SK-N-SH (cell line): ENCODE measurements at regions of chr6 and their contacts with region 1.

Region 1: DNA sequence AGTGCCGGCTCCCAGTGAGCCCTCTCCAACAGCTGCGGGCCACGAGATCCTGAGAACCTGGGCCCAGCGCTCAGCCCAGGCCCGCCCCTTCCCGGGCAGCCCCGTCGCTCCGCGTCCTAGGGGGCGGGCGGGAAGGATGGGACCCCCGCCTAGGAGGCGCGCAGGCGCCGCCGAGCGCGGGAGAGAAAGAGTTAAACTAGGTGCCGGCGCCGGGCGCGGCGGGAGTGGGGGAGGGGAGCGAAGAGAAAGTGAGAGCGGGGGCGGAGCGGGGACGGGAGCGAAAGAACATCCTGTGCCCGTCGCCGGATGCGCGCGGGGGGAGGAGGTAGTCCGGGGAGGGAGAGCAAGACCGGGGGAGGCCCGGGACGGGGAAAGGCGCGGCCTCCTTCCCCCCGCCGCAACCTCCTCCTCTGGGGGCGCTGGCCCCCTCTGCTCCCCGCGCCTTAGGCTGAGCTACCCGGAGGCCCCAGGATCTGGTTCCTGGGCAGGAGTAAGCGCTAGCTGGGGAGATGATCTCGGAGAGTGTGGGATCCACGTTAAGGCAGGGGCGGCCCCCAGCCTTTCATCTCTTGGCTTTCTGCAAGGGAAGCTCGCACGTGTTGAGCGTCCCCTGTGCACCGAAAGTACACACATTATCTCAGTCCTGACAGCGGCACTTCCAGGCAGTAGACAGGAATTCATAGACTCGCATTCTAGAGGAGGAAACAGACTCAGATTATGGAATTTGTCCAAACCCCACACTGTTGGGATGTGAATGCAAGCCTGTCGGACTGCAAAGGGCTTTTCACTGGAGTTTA is 4.9 kb upstream of the ARMC12 start:
- DNase-seq: peak; percentile 91
- H3K4me3 ChIP-seq: peak overlapping the region; percentile 76 to 89
- H3K27ac ChIP-seq: peak overlapping the region; percentile 92 to 98
- H3K4me1 ChIP-seq: peaks cover 5 to 34% of the 10 kb centered on the region in 2 experiments; a peak in 2 of 4 replicates
- H3K27me3 ChIP-seq: no peaks in the 10 kb centered on the region
- CTCF ChIP-seq: no peak
- EP300 ChIP-seq: peak in 1 of 2 experiments; percentile 58; a peak in 2 of 4 replicates
- RAD21 ChIP-seq: peak; percentile 27

Region 2: GRCh38 chr6:35522660-35523658 is 209.0 kb before region 1 on chr6:
- CTCF ChIA-PET with region 1: interaction called, 127 read pairs
- POLR2A ChIA-PET with region 1: interaction called, 6 read pairs
- DNase-seq: peak; percentile 92
- H3K4me3 ChIP-seq: peak overlapping the region in 1 of 2 experiments; percentile 21; a peak in 1 of 4 replicates
- H3K27ac ChIP-seq: no peak overlapping the region
- H3K4me1 ChIP-seq: peaks cover 0 to 5% of the 10 kb centered on the region in 2 experiments; a peak in 1 of 4 replicates
- H3K27me3 ChIP-seq: no peaks in the 10 kb centered on the region
- CTCF ChIP-seq: peak; percentile 84
- EP300 ChIP-seq: no peak
- RAD21 ChIP-seq: peak; percentile 96

Region 3: DNA sequence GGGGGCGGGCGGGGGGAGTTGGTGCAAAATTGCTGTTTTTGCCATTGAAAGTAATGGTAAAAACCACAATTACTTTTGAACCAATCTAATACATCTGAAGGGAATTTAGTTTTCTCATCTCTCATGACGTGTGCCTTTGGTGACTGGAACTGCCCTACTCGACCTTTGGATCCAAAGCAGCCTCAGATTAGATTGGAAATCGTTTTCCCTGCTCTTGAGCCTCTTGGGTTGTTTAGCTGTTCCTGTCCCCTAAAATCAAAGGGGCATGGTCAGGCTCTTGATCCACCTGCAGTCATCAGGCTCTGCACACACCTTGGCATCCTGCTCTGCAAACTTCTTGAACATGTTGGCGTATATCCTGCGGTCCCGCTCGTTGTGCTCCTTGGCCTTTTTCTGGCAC is 155.3 kb before region 1 on chr6:
- CTCF ChIA-PET with region 1: interaction called, 271 read pairs
- POLR2A ChIA-PET with region 1: no interaction called
- DNase-seq: no peak
- H3K4me3 ChIP-seq: no peak overlapping the region
- H3K27ac ChIP-seq: no peak overlapping the region
- H3K4me1 ChIP-seq: peaks cover 0 to 4% of the 10 kb centered on the region in 2 experiments; a peak in 1 of 4 replicates
- H3K27me3 ChIP-seq: no peaks in the 10 kb centered on the region
- CTCF ChIP-seq: no peak
- EP300 ChIP-seq: no peak
- RAD21 ChIP-seq: no peak

Region 4: GRCh38 chr6:35624341-35625070 is 107.4 kb before region 1 on chr6:
- CTCF ChIA-PET with region 1: interaction called, 12 read pairs
- POLR2A ChIA-PET with region 1: interaction called, 8 read pairs
- DNase-seq: peak; percentile 7
- H3K4me3 ChIP-seq: no peak overlapping the region
- H3K27ac ChIP-seq: no peak overlapping the region
- H3K4me1 ChIP-seq: no peaks in the 10 kb centered on the region
- H3K27me3 ChIP-seq: no peaks in the 10 kb centered on the region
- CTCF ChIP-seq: peak; percentile 59
- EP300 ChIP-seq: no peak
- RAD21 ChIP-seq: peak; percentile 52

Region 5: DNA sequence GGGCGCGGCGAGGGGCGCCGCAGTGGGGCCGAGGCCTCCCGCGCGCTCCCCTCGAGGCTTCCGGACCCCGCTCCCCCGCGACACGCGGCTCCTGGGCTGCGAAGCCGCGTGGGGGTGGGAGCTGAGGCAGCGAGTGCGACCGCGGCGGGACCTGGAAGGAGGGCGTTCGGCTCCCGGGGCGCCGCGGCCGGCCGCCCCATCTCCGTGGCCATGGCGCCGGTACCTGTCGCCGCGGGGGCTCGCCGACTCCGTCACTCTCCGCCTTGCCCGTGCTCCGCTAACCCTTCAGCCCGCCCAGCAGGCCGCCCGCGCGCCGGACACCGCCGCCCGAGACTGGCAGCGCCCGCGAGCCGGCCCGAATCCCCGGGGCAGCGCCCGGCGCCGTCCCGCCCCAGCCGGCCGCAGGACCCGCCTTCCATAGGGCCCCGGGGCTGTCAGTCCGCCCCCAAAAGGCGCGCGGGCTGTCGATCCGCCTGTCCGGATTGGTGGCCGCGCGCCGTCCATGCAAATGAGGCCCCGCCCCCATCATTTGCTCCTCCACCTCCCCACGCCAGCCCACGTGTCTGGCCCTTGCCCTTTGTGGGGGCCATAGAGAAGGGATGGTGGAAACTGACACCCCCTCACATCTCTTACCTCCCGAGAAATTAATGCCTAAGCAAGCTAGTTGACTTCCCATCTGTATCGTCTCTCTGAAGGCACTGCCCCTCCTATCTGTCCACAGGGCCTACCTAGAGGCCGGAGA is 43.2 kb before region 1 on chr6 and contains the start of gene FKBP5:
- CTCF ChIA-PET with region 1: interaction called, 33 read pairs
- POLR2A ChIA-PET with region 1: interaction called, 3 read pairs
- DNase-seq: peak; percentile 98
- H3K4me3 ChIP-seq: peak within 1 kb of the TSS; percentile 67 to 77
- H3K27ac ChIP-seq: peak within 1 kb of the TSS; percentile 39 to 47; a peak in 2 of 4 replicates
- H3K4me1 ChIP-seq: peaks cover 2 to 6% of the 10 kb centered on the region in 2 experiments; a peak in 3 of 4 replicates
- H3K27me3 ChIP-seq: no peaks in the 10 kb centered on the region
- CTCF ChIP-seq: no peak
- EP300 ChIP-seq: no peak
- RAD21 ChIP-seq: no peak
- polyA plus RNA-seq, gene FKBP5: 4.2 and 5.1 TPM in 2 replicates

Region 6: DNA sequence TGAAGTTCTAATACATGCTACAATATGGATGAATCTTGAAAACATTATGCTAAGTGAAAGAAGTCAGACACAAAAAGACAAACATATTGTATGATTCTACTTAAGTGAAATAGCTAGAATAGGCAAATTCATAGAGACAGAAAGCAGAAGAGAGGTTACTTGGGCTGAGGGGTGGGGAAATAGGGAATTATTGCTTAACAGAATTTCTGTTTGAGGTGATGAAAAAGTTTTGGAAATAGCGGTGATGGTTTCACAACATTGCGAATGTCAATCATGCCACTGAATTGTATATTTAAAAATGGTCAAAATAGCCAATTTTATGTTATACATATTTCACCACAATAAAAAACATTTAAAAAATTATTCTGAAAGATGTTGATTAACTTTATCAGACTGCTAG is 286.4 kb after region 1 on chr6:
- CTCF ChIA-PET with region 1: no interaction called
- POLR2A ChIA-PET with region 1: no interaction called
- DNase-seq: no peak
- H3K4me3 ChIP-seq: no peak overlapping the region
- H3K27ac ChIP-seq: no peak overlapping the region
- H3K4me1 ChIP-seq: no peaks in the 10 kb centered on the region
- H3K27me3 ChIP-seq: no peaks in the 10 kb centered on the region; the same call in 1 of the 2 replicates
- CTCF ChIP-seq: no peak
- EP300 ChIP-seq: no peak
- RAD21 ChIP-seq: no peak

Region 7: DNA sequence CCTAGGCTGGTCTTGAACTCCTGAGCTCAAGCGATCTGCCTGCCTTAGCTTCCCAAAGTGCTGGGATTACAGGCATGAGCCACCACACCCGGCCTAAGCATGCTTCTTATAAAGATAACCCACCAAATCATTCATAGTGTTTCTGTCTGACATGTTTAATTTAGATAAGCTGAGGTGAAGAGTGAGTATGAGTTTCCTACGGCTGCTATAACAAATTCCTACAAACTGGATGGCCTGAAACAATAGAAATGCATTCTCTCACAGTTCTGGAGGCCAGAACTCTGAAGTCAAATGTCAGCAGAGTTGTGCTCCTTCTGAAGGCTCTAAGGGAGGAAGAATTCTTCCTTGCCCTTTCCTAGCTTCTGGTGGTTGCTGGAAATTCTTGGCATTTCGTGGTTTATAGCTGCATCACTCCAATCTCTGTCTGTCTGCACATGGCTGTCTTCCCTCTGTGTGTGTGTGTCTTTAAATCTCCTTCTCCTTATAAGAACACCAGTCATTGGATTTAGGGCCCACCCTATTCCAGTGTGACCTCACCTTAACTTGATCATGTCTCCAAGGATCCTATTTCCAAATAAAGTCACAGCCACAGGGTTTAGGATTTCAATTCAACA is 428.3 kb after region 1 on chr6:
- CTCF ChIA-PET with region 1: no interaction called
- POLR2A ChIA-PET with region 1: no interaction called
- DNase-seq: no peak
- H3K4me3 ChIP-seq: no peak overlapping the region
- H3K27ac ChIP-seq: no peak overlapping the region
- H3K4me1 ChIP-seq: no peaks in the 10 kb centered on the region
- H3K27me3 ChIP-seq: no peaks in the 10 kb centered on the region
- CTCF ChIP-seq: no peak
- EP300 ChIP-seq: no peak
- RAD21 ChIP-seq: no peak